ENCODE measurements at regions of chr4 and their contacts with region 1.

Region 1: DNA sequence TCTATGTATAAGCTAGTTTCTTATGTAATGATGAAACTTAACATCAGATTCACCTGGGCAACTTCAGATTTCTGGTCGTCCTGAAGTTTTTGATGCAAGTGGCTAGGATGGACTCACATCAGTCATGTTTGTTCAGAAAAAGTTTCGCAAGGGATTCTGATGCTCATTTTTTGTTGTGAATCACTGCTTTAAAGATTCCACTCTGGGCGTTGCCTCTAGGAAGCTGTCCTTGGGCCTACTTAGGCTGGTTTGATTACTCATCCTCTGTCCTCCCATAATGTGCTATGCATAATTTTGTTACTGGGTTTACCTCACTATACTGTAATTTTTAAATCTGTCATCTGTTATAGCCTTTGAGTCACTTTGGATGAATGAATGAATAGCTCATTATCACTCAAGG is 30.8 kb downstream of the HERC3 start:
- DNase-seq: no peak
- ATAC-seq: peak in 1 of 2 donors; percentile 41
- H3K4me3 ChIP-seq: no peak overlapping the region
- H3K27ac ChIP-seq: no peak overlapping the region
- H3K4me1 ChIP-seq: peaks cover 25 to 35% of the 10 kb centered on the region in 2 donors
- H3K27me3 ChIP-seq: no peaks in the 10 kb centered on the region
- CTCF ChIP-seq: no peak
- POLR2A ChIP-seq: no peak

Region 2: GRCh38 chr4:88583631-88584475 is 39.2 kb before region 1 on chr4:
- in situ Hi-C with region 1: no loop called
- intact Hi-C with region 1: loop called (anchors 5 kb)
- DNase-seq: no peak
- ATAC-seq: no peak
- H3K4me3 ChIP-seq: no peak overlapping the region
- H3K27ac ChIP-seq: no peak overlapping the region
- H3K4me1 ChIP-seq: peaks cover 0 to 24% of the 10 kb centered on the region in 2 donors
- H3K27me3 ChIP-seq: no peaks in the 10 kb centered on the region
- CTCF ChIP-seq: no peak
- POLR2A ChIP-seq: no peak